Posterior cingulate gyrus (tissue), 11 donors: ENCODE measurements at regions of chr1 and their contacts with region 1.

Region 1: GRCh38 chr1:8015036-8015808 is 10.9 kb downstream of the ERRFI1 start:
- DNase-seq: peak in 1 of 10 donors; percentile 37

Region 2: GRCh38 chr1:7726623-7727022 is 288.6 kb before region 1 on chr1:
- intact Hi-C with region 1: no loop called
- DNase-seq: no peak

Region 3: DNA sequence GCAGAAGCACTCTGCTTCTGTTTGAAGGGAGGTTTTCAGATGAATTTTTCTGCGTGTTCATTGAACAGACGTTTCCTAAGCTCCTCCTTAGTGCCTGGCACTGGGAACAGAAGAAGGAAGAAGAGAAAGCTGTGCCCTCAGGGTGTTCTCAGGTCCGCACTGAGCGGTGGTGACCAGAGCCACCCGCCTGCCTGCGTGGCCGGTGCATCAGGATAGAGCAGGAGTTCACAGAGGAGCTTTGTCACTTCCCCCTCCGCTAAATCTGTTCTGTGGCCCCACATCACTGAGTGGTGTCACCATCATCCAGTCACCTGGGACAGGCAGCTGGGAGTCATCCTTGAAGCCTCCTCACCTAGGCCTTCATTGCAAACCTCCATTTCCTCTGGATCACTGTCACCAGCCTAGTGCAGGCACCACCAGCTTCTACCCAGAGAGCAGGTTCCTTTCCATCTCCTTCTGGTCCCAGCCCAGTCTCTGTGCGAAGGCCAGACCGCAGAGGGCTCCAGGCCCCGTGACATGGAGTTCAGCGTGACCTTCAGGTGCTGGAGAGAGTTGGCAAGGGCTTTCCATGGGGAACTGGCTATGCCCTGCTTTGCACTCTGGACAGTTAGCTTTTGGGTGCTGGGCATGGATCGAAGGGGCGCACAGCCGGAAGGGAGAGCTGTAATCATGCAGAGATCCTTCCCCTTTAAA is 32.0 kb before region 1 on chr1:
- intact Hi-C with region 1: loop called (anchors 5 kb)
- DNase-seq: no peak